Prostate gland (tissue), 2 donors: ENCODE measurements at regions of chr17 and their contacts with region 1.

Region 1: DNA sequence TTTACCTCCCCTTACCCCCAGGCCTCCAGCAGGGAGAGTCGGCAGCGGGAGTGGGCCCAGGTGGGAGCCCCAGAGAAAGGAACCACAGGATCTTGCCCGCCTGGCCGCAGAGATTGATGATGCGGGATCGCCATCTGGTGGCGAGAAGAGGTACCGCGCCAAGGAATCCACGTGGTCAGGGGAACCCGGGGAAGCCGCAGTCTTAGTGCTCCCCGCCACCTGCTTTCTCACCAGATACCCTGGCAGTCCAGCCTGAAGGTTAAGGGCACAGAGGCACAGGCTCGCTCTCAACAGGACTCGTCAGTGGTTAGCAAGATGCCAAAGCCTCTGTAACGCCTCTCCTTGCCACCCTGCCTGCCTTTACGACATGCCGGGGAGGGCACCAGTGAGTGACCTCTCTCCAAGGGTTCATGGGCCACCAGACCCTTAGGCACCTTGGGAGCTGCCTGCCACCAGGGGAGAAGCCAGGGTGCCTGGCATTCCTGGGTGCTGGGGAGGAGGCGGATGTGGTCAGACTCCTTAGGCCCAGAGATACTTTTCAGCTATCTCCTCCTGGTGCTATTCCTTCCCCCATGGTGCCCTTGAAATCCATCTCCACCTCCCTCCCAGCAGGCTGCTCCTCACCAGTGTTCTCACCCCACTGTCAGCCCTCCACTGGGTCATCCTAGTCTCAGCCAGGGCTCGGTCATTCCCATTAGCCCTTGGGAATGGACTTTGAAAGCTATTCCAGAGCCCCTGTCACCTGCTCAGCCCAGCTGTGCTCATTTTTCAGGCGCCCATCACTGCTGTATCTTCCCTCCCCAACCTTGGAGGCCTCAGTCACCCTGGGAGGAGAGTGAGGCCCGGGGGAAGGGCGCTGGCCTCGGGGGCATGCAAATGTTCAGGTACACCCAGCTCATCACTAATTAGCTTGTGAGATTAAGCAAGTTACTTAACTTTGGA is 5.5 kb upstream of the RHBDF2 start:
- DNase-seq: peak; percentile 75
- H3K4me3 ChIP-seq: no peak overlapping the region
- H3K27ac ChIP-seq: no peak overlapping the region
- H3K4me1 ChIP-seq: no peaks in the 10 kb centered on the region
- H3K27me3 ChIP-seq: no peaks in the 10 kb centered on the region
- CTCF ChIP-seq: peak; percentile 88 to 98 (median 96)
- POLR2A ChIP-seq: no peak

Region 2: GRCh38 chr17:76304226-76305134 is 202.2 kb before region 1 on chr17:
- intact Hi-C with region 1: loop called (anchors 5 kb)
- DNase-seq: no peak
- H3K4me3 ChIP-seq: no peak overlapping the region
- H3K27ac ChIP-seq: no peak overlapping the region
- H3K4me1 ChIP-seq: no peaks in the 10 kb centered on the region
- H3K27me3 ChIP-seq: no peaks in the 10 kb centered on the region
- CTCF ChIP-seq: no peak
- POLR2A ChIP-seq: no peak

Region 3: DNA sequence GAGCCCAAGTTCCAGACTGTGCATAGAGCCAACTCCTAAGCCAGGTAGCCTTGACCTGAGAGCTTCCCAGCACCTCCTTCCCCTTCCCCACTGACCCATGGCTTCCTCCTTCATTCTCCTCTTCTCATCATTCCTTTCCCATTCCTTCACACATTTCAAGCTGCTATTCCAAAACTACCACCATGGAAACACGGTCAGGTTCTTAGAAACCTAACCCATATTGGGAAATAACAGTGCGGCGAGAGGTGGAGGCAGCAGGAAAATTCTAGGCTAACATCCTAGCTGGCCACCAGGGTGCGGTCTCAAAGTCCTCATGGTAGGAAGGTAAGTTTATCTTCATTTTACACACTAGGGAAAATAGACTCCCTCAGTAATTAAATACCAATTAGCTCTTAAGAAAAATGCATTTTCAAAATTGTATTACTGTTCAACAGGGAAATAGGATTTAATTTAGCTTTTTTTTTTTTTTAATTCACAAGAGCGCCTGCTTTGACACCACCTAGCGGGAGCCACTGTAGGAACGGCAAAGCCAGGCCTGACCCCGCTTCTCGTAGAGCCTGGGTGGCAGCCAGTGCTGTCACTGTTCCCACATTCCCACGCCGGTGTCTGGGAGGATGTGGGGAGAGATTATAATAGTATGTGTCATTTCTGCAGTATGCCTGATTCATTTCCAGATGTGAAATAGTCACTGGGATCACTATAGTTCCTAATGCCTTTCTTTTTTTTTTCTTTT is 136.3 kb before region 1 on chr17:
- intact Hi-C with region 1: no loop called
- DNase-seq: peak; percentile 29
- H3K4me3 ChIP-seq: no peak overlapping the region
- H3K27ac ChIP-seq: no peak overlapping the region
- H3K4me1 ChIP-seq: no peaks in the 10 kb centered on the region
- H3K27me3 ChIP-seq: no peaks in the 10 kb centered on the region
- CTCF ChIP-seq: peak in 2 of 4 experiments; percentile 24 to 27
- POLR2A ChIP-seq: no peak

Region 4: GRCh38 chr17:76408052-76408849 is 98.4 kb before region 1 on chr17:
- intact Hi-C with region 1: loop called (anchors 5 kb)
- DNase-seq: peak; percentile 65
- H3K4me3 ChIP-seq: no peak overlapping the region
- H3K27ac ChIP-seq: no peak overlapping the region
- H3K4me1 ChIP-seq: no peaks in the 10 kb centered on the region
- H3K27me3 ChIP-seq: no peaks in the 10 kb centered on the region
- CTCF ChIP-seq: peak; percentile 29 to 70 (median 62)
- POLR2A ChIP-seq: no peak

Region 5: DNA sequence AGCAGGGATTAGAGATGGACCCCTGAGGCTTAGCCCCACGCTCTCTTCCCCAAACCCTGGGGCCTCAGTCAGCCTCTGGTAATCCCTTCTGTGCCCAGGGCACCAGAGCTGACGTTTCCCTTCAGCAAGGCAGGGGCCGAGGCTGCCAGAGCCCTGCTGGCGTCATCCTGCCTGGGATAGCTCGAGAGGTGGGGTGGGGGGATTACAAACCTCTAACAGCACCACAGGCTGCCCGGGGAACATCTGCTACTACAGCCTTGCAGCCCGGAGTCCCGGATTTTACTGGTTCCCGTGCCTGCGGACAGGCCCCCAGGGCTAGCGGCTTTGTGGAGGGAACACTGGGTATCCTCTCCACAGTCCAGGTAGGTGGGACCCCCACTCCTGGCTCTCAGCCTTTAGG is 39.3 kb before region 1 on chr17 and contains the start of gene AANAT:
- intact Hi-C with region 1: loop called (anchors 2 kb)
- DNase-seq: no peak
- H3K4me3 ChIP-seq: no peak within 1 kb of the TSS
- H3K27ac ChIP-seq: no peak within 1 kb of the TSS
- H3K4me1 ChIP-seq: no peaks in the 10 kb centered on the region
- H3K27me3 ChIP-seq: no peaks in the 10 kb centered on the region
- CTCF ChIP-seq: no peak
- POLR2A ChIP-seq: no peak
- total RNA-seq, gene AANAT: not detected

Region 6: DNA sequence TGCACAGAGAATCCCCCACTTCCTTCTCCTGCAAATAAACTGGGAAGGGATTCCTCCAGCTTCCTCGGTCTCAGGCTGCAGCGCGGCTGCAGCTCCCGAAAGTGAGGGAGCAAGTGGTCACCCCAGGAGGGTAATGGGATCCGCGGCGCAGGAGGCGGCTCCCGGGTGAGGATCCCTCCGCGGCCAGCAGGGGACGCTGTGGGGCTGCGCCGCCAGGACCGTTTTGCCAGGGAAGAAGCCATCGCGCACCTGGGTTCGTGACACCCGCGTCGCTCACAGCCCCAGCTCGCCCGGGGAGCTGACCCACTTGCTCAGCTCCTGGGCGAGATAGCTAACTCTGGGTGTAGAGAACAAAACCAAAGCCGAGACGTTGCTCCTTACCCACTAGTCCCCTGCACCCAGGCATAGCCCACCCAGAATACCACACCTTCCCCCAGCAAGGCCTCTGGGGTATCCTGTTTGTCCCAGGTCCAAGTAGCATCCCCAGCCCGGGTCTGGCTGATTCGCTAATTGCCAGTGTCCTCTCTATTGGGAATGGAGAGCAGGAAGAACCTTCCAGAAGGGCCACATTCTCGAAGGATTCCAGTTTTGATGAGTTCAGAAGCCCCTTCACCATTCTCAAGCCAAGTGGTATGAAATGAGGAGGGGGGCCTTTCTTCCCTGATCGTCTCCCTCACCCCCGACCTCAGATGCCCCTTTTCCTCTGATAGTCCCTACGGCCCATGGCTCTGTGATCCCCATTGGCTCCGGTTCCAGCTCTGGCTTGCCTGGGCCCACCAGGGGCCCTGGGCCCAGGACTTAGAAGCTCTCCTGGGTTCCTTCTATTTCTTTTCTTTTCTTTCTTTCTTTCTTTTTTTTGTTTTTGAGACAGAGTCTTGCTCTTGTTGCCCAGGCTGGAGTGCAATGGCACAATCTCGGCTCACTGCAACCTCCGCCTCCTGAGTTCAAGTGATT is 16.7 kb after region 1 on chr17:
- intact Hi-C with region 1: no loop called
- DNase-seq: no peak
- H3K4me3 ChIP-seq: no peak overlapping the region
- H3K27ac ChIP-seq: no peak overlapping the region
- H3K4me1 ChIP-seq: peaks cover 7% of the 10 kb centered on the region
- H3K27me3 ChIP-seq: no peaks in the 10 kb centered on the region
- CTCF ChIP-seq: peak; percentile 99
- POLR2A ChIP-seq: no peak